ENCODE measurements at regions of chr5 and their contacts with region 1.

Region 1: DNA sequence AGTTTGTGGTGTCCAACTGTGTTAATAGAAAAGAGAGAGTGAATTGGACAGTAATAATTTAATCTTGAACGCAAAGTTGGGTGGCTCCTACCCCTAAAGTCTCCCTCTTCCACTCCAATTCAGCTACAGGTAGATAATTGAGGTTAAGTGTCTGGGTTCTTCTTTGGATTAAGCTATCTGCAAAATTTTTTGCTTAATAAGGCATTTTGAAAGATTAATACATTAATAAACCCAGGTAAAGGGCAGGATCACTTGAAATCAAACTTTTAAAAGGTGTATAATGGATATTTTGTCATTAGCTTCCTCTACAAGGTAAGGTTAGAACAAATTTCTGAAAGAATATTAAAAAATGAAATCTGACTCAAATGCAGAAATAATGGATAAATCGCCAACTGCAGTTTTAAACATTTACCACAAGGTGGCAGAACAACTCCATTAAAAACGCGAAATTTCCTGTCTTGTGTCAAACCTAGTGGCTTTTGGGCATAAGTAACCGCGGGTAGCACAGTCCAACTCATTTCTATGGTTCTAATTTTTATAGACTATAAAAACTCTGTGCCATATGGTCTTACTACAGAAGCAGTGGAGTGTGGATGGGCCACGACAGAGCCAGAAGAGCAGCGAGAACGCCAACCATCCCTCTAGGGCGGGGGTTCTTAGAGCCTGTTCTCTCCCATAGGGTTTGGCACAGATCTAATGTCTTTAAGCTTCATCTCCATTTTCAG is 276.5 kb downstream of the ARHGEF28 start:
- DNase-seq: peak; percentile 23
- ATAC-seq: no peak
- H3K4me3 Mint-ChIP-seq: no peak overlapping the region
- H3K27ac Mint-ChIP-seq: no peak overlapping the region
- H3K4me1 Mint-ChIP-seq: no peaks in the 10 kb centered on the region
- H3K27me3 Mint-ChIP-seq: peaks cover 10% of the 10 kb centered on the region

Region 2: GRCh38 chr5:73917433-73917832 is 14.9 kb after region 1 on chr5:
- CTCF ChIA-PET with region 1: interaction called, 10 read pairs
- POLR2A ChIA-PET with region 1: no interaction called
- DNase-seq: no peak
- ATAC-seq: no peak
- H3K4me3 Mint-ChIP-seq: no peak overlapping the region
- H3K27ac Mint-ChIP-seq: no peak overlapping the region
- H3K4me1 Mint-ChIP-seq: no peaks in the 10 kb centered on the region
- H3K27me3 Mint-ChIP-seq: peaks cover 13% of the 10 kb centered on the region

Region 3: GRCh38 chr5:73968729-73969128 is 66.2 kb after region 1 on chr5:
- CTCF ChIA-PET with region 1: no interaction called
- POLR2A ChIA-PET with region 1: no interaction called
- DNase-seq: no peak
- ATAC-seq: no peak
- H3K4me3 Mint-ChIP-seq: no peak overlapping the region
- H3K27ac Mint-ChIP-seq: no peak overlapping the region
- H3K4me1 Mint-ChIP-seq: no peaks in the 10 kb centered on the region
- H3K27me3 Mint-ChIP-seq: peaks cover 4% of the 10 kb centered on the region

Region 4: DNA sequence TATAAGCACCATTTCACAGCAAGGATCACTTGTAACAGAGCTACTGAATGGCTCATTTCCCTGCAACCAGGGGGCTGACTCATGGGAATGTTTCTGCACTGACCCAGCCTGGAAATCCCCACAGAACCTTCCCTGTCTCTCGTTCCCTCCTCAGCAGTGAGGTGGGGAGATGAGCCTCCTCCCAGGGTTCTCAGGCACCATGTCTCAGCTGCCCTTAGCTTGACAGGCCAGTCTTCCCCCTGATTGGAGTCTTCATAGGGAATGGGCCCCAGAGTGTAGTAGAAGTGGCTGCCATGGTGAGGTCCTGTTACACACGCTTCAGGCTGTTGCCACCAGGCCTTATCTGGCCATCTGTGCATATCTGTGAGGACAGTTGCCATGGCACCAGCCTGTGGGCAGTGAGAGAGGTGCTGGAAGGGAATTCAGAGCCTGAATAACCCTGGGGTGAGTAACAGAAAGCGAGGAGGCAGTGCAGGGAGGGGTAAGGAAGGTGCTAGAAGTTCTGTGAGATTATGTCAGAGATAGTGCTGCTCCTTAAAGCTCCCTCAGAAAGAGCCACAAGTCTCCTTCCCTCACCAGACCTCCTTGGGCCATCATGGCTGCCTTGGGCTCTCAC is 413.7 kb after region 1 on chr5:
- CTCF ChIA-PET with region 1: no interaction called
- POLR2A ChIA-PET with region 1: no interaction called
- DNase-seq: no peak
- ATAC-seq: no peak
- H3K4me3 Mint-ChIP-seq: no peak overlapping the region
- H3K27ac Mint-ChIP-seq: no peak overlapping the region
- H3K4me1 Mint-ChIP-seq: no peaks in the 10 kb centered on the region
- H3K27me3 Mint-ChIP-seq: peaks cover 7% of the 10 kb centered on the region

Region 5: DNA sequence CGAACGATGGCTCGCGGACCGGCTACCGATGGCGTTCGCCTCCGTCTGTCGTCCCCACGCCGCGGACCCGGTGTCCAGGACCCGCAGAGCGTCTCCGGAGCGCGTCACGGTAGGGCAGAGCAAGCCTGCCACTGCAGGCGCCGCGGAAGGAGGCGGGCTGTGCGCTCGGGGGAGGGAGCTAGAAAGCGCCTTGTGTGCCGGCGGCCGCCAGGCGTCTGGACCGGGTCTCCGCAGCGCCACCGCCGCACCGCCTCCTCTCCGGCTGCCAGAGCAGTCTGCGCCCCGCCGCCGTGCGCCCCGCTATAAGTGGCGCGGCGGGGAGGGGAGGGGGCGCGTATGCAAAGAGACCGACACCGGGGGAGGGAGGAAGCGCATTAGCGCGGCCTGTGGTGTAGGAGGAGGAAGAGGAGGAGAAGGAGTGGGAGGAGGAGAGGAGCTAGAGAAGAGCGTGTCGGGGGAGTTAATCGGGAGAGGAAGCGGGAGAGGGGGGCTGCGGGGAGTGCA is 738.0 kb after region 1 on chr5 and contains the start of gene ENC1:
- CTCF ChIA-PET with region 1: interaction called, 38 read pairs
- POLR2A ChIA-PET with region 1: no interaction called
- DNase-seq: peak; percentile 82
- ATAC-seq: peak; percentile 93
- H3K4me3 Mint-ChIP-seq: peak within 1 kb of the TSS; percentile 77
- H3K27ac Mint-ChIP-seq: peak within 1 kb of the TSS; percentile 41
- H3K4me1 Mint-ChIP-seq: peaks cover 30% of the 10 kb centered on the region
- H3K27me3 Mint-ChIP-seq: peaks cover 53% of the 10 kb centered on the region
- total RNA-seq, gene ENC1: 0.50 to 0.55 TPM

Region 6: DNA sequence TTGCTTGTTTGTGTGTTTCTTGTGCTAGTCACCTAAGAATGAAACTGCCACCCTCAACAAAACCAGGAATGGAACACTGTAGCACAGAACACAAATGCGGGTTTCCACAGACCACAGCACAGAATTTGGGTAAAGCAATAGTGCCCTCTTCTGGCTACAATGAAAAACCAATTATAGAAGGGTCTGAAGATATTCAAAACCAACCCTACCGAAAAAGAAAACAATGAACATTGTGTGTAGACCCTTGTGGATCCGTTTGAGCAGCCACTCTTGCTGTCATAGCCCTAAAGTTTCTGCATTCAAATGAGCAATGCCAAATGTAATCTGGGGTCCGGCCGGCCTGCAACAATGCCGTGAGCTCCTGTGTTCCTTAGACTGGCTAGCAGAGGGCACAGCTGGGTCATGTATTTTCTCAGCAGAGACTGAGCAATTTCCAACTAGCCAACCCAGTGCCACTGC is 746.4 kb after region 1 on chr5:
- CTCF ChIA-PET with region 1: interaction called, 38 read pairs
- POLR2A ChIA-PET with region 1: no interaction called
- DNase-seq: peak; percentile 52
- ATAC-seq: peak; percentile 84
- H3K4me3 Mint-ChIP-seq: no peak overlapping the region
- H3K27ac Mint-ChIP-seq: no peak overlapping the region
- H3K4me1 Mint-ChIP-seq: peaks cover 2% of the 10 kb centered on the region
- H3K27me3 Mint-ChIP-seq: peaks cover 12% of the 10 kb centered on the region

Measured in activated CD8-positive, alpha-beta T cell treated with anti-CD3 and anti-CD28 coated beads, Interleukin-2, amount 10 ng/mL, durations not matched to agents 7 days and 5 days (primary cell).